Breast epithelium (tissue), 4 donors: ENCODE measurements at regions of chr18 and their contacts with region 1.

Region 1: GRCh38 chr18:41569867-41570266 is 385.2 kb upstream of the PIK3C3 start:
- DNase-seq: no peak
- H3K4me3 ChIP-seq: no peak overlapping the region
- H3K27ac ChIP-seq: no peak overlapping the region
- H3K4me1 ChIP-seq: no peaks in the 10 kb centered on the region
- H3K27me3 ChIP-seq: no peaks in the 10 kb centered on the region
- CTCF ChIP-seq: no peak
- POLR2A ChIP-seq: no peak

Region 2: GRCh38 chr18:41378598-41378997 is 191.3 kb before region 1 on chr18:
- intact Hi-C with region 1: loop called (anchors 5 kb)
- DNase-seq: no peak
- H3K4me3 ChIP-seq: no peak overlapping the region
- H3K27ac ChIP-seq: no peak overlapping the region
- H3K4me1 ChIP-seq: no peaks in the 10 kb centered on the region
- H3K27me3 ChIP-seq: no peaks in the 10 kb centered on the region
- CTCF ChIP-seq: no peak
- POLR2A ChIP-seq: no peak